Ovary (tissue), 10 donors: ENCODE measurements at regions of chr12 and their contacts with region 1.

Region 1: GRCh38 chr12:109763201-109763841 is 49.7 kb downstream of the FAM222A start:
- DNase-seq: peak in 2 of 5 donors; percentile 2 to 8
- H3K4me3 ChIP-seq: no peak overlapping the region
- H3K27ac ChIP-seq: no peak overlapping the region
- H3K4me1 ChIP-seq: peaks cover 19% of the 10 kb centered on the region
- H3K27me3 ChIP-seq: no peaks in the 10 kb centered on the region
- CTCF ChIP-seq: no peak
- EP300 ChIP-seq: no peak
- POLR2A ChIP-seq: no peak

Region 2: GRCh38 chr12:110836291-110836690 is 1073.0 kb after region 1 on chr12:
- intact Hi-C with region 1: loop called in 1 of 4 experiments (anchors 10 kb)
- DNase-seq: no peak
- H3K4me3 ChIP-seq: no peak overlapping the region
- H3K27ac ChIP-seq: no peak overlapping the region
- H3K4me1 ChIP-seq: no peaks in the 10 kb centered on the region
- H3K27me3 ChIP-seq: no peaks in the 10 kb centered on the region
- CTCF ChIP-seq: no peak
- EP300 ChIP-seq: no peak
- POLR2A ChIP-seq: no peak